Panc1 (cell line): ENCODE measurements at regions of chr4 and their contacts with region 1.

Region 1: DNA sequence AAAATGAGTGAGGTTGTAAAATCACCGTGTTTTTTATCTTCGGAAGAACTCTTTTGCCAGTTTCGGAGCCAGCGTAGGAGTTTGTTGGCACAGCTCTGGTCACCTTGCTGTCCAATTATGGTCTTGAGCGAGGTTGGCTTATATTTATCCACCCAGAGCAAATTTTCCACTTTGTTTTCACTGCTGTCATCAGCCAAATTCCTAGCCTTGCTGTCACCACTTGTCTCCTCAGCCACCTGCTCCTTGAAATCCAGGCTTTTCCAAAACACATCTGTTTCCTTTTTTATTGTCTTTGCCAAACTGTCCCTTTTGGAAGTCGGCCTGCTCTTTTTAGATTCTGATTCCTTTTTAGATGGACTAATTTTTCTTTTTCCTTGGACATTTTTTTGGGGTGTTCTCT is 57.6 kb downstream of the RFC1 start:
- DNase-seq: no peak
- ATAC-seq: no peak
- H3K4me3 ChIP-seq: no peak overlapping the region
- H3K27ac ChIP-seq: no peak overlapping the region
- H3K4me1 ChIP-seq: no peaks in the 10 kb centered on the region; the same call in 1 of the 2 replicates
- H3K27me3 ChIP-seq: no peaks in the 10 kb centered on the region
- CTCF ChIP-seq: no peak

Region 2: DNA sequence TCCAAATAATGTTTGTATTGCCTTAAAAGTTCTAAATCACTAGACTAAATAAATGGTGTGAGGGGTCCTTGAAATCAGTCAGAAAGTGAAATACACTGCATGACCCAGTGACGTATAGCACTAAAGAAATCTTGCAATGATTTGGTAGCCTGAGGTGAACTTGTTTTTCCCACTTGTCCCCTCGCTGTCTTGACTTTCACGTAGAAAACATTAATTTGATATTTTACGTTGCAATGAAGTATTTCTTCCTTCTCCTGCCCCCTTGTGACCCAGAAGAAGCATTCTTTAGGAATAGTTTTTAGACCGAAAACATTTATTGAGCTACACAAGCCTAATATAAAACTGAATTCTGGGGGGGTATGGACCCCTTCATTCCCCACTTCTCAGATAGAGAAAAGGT is 101.8 kb after region 1 on chr4:
- CTCF ChIA-PET with region 1: interaction called, 12 read pairs
- POLR2A ChIA-PET with region 1: no interaction called
- in situ Hi-C with region 1: no loop called
- intact Hi-C with region 1: no loop called
- DNase-seq: no peak
- ATAC-seq: no peak; the same call in 1 of the 2 replicates
- H3K4me3 ChIP-seq: peak overlapping the region; percentile 35 to 45
- H3K27ac ChIP-seq: 0 out of 2 replicates have a peak overlapping the region, but pooled peaks have one; percentile 17
- H3K4me1 ChIP-seq: no peaks in the 10 kb centered on the region
- H3K27me3 ChIP-seq: no peaks in the 10 kb centered on the region
- CTCF ChIP-seq: peak; percentile 32; the same call in 1 of the 2 replicates